ENCODE measurements at regions of chr13 and their contacts with region 1.

Region 1: DNA sequence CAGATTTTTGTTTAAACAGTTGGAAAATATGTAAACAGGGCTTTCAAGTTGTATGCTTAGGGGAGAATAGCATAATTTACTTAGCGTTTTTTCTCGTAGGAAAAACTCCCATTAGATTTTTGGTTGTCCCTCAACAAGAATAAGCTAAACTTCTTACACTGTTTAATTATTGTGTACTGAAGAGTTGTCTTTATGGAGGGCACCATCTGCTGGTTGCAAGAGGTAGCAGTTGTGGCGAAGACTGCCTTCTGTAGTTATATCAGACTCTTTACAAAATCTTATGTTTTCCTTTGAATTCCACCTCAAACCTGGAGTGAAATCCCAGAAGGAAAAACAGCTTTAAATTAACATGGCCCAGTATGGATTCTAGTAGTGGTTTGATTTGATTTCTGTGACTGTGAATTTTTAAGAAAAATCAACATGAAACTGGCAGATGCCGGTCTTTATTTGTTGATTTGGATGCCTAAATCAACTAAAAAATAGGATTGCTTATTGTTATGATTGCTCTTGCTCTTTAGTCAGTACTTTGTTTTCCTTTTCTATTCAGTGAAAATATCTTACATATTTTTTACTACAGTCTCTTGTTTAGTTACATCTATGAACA is 53.4 kb downstream of the PDS5B start:
- DNase-seq: peak; percentile 30
- ATAC-seq: peak; percentile 84; the same call in 1 of the 2 replicates
- H3K4me3 ChIP-seq: no peak overlapping the region
- H3K27ac ChIP-seq: no peak overlapping the region
- H3K4me1 ChIP-seq: peaks cover 13% of the 10 kb centered on the region
- H3K27me3 ChIP-seq: no peaks in the 10 kb centered on the region
- CTCF ChIP-seq: peak; percentile 70; the same call in 1 of the 2 replicates

Region 2: DNA sequence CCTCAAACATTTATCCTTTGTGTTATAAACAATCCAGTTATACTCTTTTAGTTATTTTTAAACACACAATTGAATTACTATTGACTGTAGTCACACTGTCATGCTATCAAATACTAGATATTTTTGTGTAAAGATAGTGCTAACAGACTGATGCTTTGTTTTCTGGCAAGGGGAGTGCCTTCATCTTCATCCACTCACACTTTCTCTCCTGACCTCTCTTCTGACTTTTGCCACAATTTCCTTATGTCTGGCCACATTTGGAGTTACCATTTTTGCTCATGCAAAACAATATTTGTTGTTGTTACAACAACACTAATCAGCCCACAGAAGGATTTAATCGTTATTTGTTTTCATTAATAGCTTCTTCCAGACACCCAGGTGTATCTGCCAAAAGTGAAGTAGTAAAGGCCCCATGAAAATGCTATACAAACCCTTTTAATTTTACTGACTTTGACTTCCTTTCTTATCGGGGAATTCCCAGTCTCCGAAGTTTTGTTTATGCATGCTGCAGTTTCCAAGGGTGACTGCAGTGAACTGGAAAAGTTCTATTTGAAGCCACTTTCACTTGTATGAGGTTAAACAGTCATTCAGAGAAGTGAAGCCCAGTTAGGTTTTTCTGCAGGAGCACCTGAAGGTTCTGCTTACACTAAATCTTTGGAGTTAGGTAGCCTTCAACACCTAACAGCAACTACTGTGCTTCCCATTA is 674.1 kb before region 1 on chr13:
- CTCF ChIA-PET with region 1: no interaction called
- POLR2A ChIA-PET with region 1: interaction called, 14 read pairs
- in situ Hi-C with region 1: no loop called
- intact Hi-C with region 1: no loop called
- DNase-seq: no peak
- ATAC-seq: peak; percentile 60; the same call in 1 of the 2 replicates
- H3K4me3 ChIP-seq: no peak overlapping the region
- H3K27ac ChIP-seq: no peak overlapping the region
- H3K4me1 ChIP-seq: 0 out of 2 replicates have a peak, but pooled peaks cover 2% of the 10 kb centered on the region
- H3K27me3 ChIP-seq: no peaks in the 10 kb centered on the region
- CTCF ChIP-seq: no peak

Region 3: GRCh38 chr13:32347651-32348050 is 292.0 kb before region 1 on chr13:
- CTCF ChIA-PET with region 1: no interaction called
- POLR2A ChIA-PET with region 1: no interaction called
- in situ Hi-C with region 1: no loop called
- intact Hi-C with region 1: no loop called
- DNase-seq: no peak
- ATAC-seq: no peak
- H3K4me3 ChIP-seq: no peak overlapping the region
- H3K27ac ChIP-seq: no peak overlapping the region
- H3K4me1 ChIP-seq: no peaks in the 10 kb centered on the region
- H3K27me3 ChIP-seq: no peaks in the 10 kb centered on the region
- CTCF ChIP-seq: no peak

Region 4: GRCh38 chr13:32586080-32586900 is 53.3 kb before region 1 on chr13 and contains the start of gene PDS5B:
- CTCF ChIA-PET with region 1: interaction called, 7 read pairs
- POLR2A ChIA-PET with region 1: no interaction called
- in situ Hi-C with region 1: no loop called
- intact Hi-C with region 1: loop called (anchors 5 kb)
- DNase-seq: no peak
- ATAC-seq: peak; percentile 95
- H3K4me3 ChIP-seq: peak within 1 kb of the TSS; percentile 78 to 86
- H3K27ac ChIP-seq: peak within 1 kb of the TSS; percentile 79
- H3K4me1 ChIP-seq: peaks cover 9% of the 10 kb centered on the region
- H3K27me3 ChIP-seq: no peaks in the 10 kb centered on the region
- CTCF ChIP-seq: peak; percentile 94
- total RNA-seq, gene PDS5B: 33.9 TPM

Region 5: GRCh38 chr13:32695602-32696250 is 56.1 kb after region 1 on chr13:
- CTCF ChIA-PET with region 1: no interaction called
- POLR2A ChIA-PET with region 1: no interaction called
- in situ Hi-C with region 1: no loop called
- intact Hi-C with region 1: no loop called
- DNase-seq: no peak
- ATAC-seq: no peak
- H3K4me3 ChIP-seq: no peak overlapping the region
- H3K27ac ChIP-seq: no peak overlapping the region
- H3K4me1 ChIP-seq: no peaks in the 10 kb centered on the region
- H3K27me3 ChIP-seq: no peaks in the 10 kb centered on the region
- CTCF ChIP-seq: no peak